CD14-positive monocyte (primary cell): ENCODE measurements at regions of chr17 and their contacts with region 1.

Region 1: GRCh38 chr17:78915872-78916632 is 9.1 kb downstream of the TIMP2 start:
- DNase-seq: peak; percentile 84 to 89 (median 84)
- H3K4me3 ChIP-seq: peak overlapping the region; percentile 30 to 78 (median 50)
- H3K4me3 Mint-ChIP-seq: peak overlapping the region; percentile 82 to 92
- H3K27ac ChIP-seq: peak overlapping the region; percentile 98 to 99
- H3K27ac Mint-ChIP-seq: peak overlapping the region; percentile 96 to 99 (median 98)
- H3K4me1 ChIP-seq: peaks cover 99 to 100% of the 10 kb centered on the region in 2 donors
- H3K4me1 Mint-ChIP-seq: peaks cover 89% of the 10 kb centered on the region
- H3K27me3 ChIP-seq: no peaks in the 10 kb centered on the region
- H3K27me3 Mint-ChIP-seq: no peaks in the 10 kb centered on the region
- CTCF ChIP-seq: no peak

Region 2: DNA sequence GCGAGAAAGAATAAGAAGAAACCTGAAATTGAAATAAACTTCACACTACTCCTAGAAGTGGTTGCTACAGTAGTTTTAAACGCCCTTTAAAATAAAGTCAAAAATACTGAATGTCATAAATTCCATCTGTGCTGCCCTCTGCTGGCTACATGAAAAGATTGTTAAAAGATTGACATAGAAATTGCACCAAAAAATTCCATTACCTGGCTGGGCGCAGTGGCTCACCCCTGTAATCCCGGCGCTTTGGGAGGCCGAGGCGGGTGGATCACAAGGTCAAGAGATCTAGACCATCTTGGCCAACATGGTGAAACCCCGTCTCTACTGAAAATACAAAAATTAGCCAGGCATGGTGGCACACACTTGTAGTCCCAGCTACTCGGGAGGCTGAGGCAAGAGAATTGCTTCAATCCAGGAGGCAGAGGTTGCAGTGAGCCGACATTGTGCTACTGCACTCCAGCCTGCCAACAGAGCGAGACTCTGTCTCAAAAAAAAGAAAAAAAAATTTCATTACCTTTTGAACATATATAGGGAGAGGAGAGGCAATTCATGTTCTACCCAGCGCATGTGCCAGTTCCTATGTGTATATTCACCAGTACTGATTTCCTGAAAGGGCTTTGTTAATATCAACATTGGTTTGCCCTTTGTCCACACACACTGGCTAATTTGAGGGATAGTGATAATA is 170.5 kb before region 1 on chr17:
- intact Hi-C with region 1: loop called in 1 of 2 experiments (anchors 10 kb)
- DNase-seq: peak in 2 of 3 donors; percentile 30 to 41
- H3K4me3 ChIP-seq: peak overlapping the region in 1 of 3 experiments; percentile 67
- H3K4me3 Mint-ChIP-seq: peak overlapping the region in 1 of 2 donors; percentile 15
- H3K27ac ChIP-seq: peak overlapping the region; percentile 1 to 88
- H3K27ac Mint-ChIP-seq: peak overlapping the region; percentile 87 to 98 (median 97)
- H3K4me1 ChIP-seq: peaks cover 71 to 89% of the 10 kb centered on the region in 2 donors
- H3K4me1 Mint-ChIP-seq: peaks cover 85% of the 10 kb centered on the region
- H3K27me3 ChIP-seq: no peaks in the 10 kb centered on the region
- H3K27me3 Mint-ChIP-seq: peaks cover 0 to 8% (median 0%) of the 10 kb centered on the region in 3 donors
- CTCF ChIP-seq: peak; percentile 90

Region 3: DNA sequence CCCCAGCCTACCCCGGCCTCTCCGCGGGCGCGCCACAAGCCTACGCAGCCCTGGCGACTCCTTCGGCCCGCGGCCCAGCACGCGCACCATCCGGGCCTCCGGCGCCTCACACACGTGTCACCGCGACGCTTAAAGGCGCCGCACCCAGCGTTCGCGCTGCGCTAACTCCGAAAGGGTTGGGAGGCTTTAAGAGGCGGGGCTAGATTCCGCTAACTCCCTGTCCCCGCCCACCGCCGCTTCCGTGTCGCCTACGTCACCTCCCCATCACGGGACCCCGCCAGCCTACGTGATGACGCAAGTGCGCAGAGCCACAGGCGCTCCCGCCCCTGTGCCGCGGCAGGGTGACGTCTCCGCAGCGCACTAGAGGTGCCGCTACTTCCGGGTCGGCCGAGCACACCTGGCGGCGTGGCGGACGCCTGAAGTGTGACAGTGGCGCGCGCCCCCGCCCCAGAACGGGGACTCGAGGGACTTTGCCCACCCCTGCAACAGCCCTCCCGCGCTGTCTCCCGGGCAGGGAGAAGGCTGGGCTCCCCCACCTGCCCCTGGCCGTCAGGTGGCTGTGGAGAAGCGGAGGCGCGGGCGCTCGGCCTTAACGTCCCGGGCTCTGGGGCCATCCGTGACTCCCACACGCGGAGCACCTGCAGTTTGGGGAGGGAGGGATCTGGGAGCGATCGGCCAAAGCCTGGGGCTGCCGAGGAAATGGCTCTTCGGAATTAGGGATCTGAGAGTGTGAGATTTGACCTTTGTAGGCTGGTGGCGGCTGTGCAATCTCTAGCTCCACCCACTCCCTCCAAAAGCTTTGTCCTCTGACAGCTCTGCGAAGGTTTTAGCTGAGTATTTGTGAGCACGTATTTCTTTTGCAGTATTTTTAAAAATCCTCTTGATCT is 75.1 kb before region 1 on chr17 and contains the start of gene USP36:
- intact Hi-C with region 1: loop called in 1 of 2 experiments (anchors 5 kb)
- DNase-seq: peak; percentile 99 to 100 (median 99)
- H3K4me3 ChIP-seq: peak within 1 kb of the TSS; percentile 76 to 80 (median 80)
- H3K4me3 Mint-ChIP-seq: peak within 1 kb of the TSS; percentile 89 to 94
- H3K27ac ChIP-seq: peak within 1 kb of the TSS; percentile 96 to 99
- H3K27ac Mint-ChIP-seq: peak within 1 kb of the TSS; percentile 97 to 99 (median 99)
- H3K4me1 ChIP-seq: peaks cover 18 to 33% of the 10 kb centered on the region in 2 donors
- H3K4me1 Mint-ChIP-seq: peaks cover 35% of the 10 kb centered on the region
- H3K27me3 ChIP-seq: no peaks in the 10 kb centered on the region
- H3K27me3 Mint-ChIP-seq: peaks cover 0 to 6% (median 2%) of the 10 kb centered on the region in 3 donors
- CTCF ChIP-seq: no peak
- polyA plus RNA-seq, gene USP36: 4.4 to 30.0 (median 6.1) TPM

Region 4: GRCh38 chr17:78883164-78884122 is 32.6 kb before region 1 on chr17:
- intact Hi-C with region 1: loop called (anchors 5 kb)
- DNase-seq: peak; percentile 96 to 98 (median 97)
- H3K4me3 ChIP-seq: peak overlapping the region in 2 of 3 experiments; percentile 14 to 59
- H3K4me3 Mint-ChIP-seq: peak overlapping the region; percentile 70 to 79
- H3K27ac ChIP-seq: peak overlapping the region; percentile 96 to 98
- H3K27ac Mint-ChIP-seq: peak overlapping the region; percentile 97 to 99 (median 98)
- H3K4me1 ChIP-seq: peaks cover 73 to 89% of the 10 kb centered on the region in 2 donors
- H3K4me1 Mint-ChIP-seq: peaks cover 75% of the 10 kb centered on the region
- H3K27me3 ChIP-seq: no peaks in the 10 kb centered on the region
- H3K27me3 Mint-ChIP-seq: peaks cover 0 to 2% (median 2%) of the 10 kb centered on the region in 3 donors
- CTCF ChIP-seq: peak; percentile 8

Region 5: GRCh38 chr17:78890498-78890897 is 25.6 kb before region 1 on chr17:
- intact Hi-C with region 1: loop called in 1 of 2 experiments (anchors 2 kb)
- DNase-seq: peak; percentile 96 to 97 (median 96)
- H3K4me3 ChIP-seq: peak overlapping the region in 1 of 3 experiments; percentile 42
- H3K4me3 Mint-ChIP-seq: peak overlapping the region; percentile 54 to 74
- H3K27ac ChIP-seq: peak overlapping the region; percentile 94
- H3K27ac Mint-ChIP-seq: peak overlapping the region; percentile 95 to 99 (median 98)
- H3K4me1 ChIP-seq: peaks cover 76 to 80% of the 10 kb centered on the region in 2 donors
- H3K4me1 Mint-ChIP-seq: peaks cover 92% of the 10 kb centered on the region
- H3K27me3 ChIP-seq: no peaks in the 10 kb centered on the region
- H3K27me3 Mint-ChIP-seq: peaks cover 0 to 2% (median 0%) of the 10 kb centered on the region in 3 donors
- CTCF ChIP-seq: no peak